ENCODE measurements at regions of chr16 and their contacts with region 1.

Region 1: GRCh38 chr16:68310761-68311511 is at the starts of genes PRMT7 and SLC7A6OS:
- DNase-seq: peak; percentile 88 to 94 (median 88)
- H3K4me3 ChIP-seq: peak within 1 kb of the TSS; percentile 88 to 97 (median 95)
- H3K4me3 Mint-ChIP-seq: peak within 1 kb of the TSS; percentile 92 to 95
- H3K27ac ChIP-seq: peak within 1 kb of the TSS; percentile 93 to 94
- H3K27ac Mint-ChIP-seq: peak within 1 kb of the TSS; percentile 91 to 96 (median 95)
- H3K4me1 ChIP-seq: peaks cover 23 to 26% of the 10 kb centered on the region in 2 donors
- H3K4me1 Mint-ChIP-seq: peaks cover 19% of the 10 kb centered on the region
- H3K27me3 ChIP-seq: no peaks in the 10 kb centered on the region
- H3K27me3 Mint-ChIP-seq: no peaks in the 10 kb centered on the region
- CTCF ChIP-seq: peak; percentile 19
- polyA plus RNA-seq, gene PRMT7: 15.0 to 41.1 (median 15.2) TPM
- polyA plus RNA-seq, gene SLC7A6OS: 9.3 to 10.5 (median 9.7) TPM

Region 2: GRCh38 chr16:68244903-68245853 is 65.8 kb before region 1 on chr16 and contains the start of gene PLA2G15:
- intact Hi-C with region 1: loop called (anchors 5 kb)
- DNase-seq: peak; percentile 79 to 92 (median 88)
- H3K4me3 ChIP-seq: peak within 1 kb of the TSS; percentile 69 to 89 (median 86)
- H3K4me3 Mint-ChIP-seq: peak within 1 kb of the TSS; percentile 97 to 98
- H3K27ac ChIP-seq: peak within 1 kb of the TSS; percentile 61 to 86
- H3K27ac Mint-ChIP-seq: peak within 1 kb of the TSS; percentile 60 to 92 (median 86)
- H3K4me1 ChIP-seq: peaks cover 39 to 47% of the 10 kb centered on the region in 2 donors
- H3K4me1 Mint-ChIP-seq: peaks cover 49% of the 10 kb centered on the region
- H3K27me3 ChIP-seq: no peaks in the 10 kb centered on the region
- H3K27me3 Mint-ChIP-seq: peaks cover 0 to 5% (median 0%) of the 10 kb centered on the region in 3 donors
- CTCF ChIP-seq: no peak
- polyA plus RNA-seq, gene PLA2G15: 27.8 to 34.8 (median 29.5) TPM

Region 3: DNA sequence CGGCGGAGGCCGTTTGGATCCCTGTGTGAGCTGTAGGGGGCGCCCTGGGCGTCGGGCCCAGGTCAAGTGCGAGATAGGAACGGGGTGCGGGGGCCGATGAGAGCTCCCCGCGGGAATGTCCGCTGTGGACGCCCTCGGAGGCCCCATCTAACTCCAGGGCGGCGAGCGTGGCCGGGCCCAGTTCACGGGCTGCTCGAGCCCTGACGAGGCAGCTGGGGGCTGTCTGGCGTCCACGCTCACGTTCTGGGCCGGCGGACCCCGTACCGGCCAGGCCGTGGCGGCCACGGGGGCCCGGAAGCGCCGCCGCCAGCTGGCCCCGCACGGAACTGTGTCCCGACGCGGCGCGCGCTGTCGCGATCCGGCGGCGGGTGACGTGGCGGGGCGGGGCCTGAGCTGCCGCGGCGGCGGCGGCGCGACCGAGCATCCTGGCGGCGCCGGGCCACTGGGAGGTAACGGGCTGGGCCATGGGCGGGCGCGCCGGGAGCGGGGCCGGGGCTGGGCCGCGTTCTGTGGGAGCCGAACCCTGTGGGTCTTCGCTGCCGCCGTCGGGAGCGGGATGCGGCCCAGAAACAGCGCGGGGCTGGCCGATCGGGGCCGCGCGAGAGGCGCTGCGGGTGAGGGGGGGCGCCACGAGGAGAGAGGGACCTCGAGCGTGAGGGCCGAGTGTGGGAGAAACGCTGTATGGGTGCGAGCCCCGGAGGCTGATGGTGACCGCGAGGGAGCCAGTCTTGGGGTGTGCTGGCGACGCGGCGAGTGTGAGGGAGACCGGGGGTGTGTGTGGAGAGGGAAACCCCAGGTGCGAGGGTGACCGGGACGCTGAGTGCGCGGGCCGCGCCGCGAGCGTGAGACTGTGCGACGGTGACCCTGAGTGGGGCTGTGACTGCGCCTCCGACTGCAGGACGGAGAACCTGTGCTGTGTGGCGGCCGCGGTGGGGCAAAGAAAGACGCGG is 46.5 kb before region 1 on chr16 and contains the start of gene SLC7A6:
- intact Hi-C with region 1: loop called (anchors 5 kb)
- DNase-seq: peak; percentile 64 to 75 (median 75)
- H3K4me3 ChIP-seq: peak within 1 kb of the TSS; percentile 73 to 83 (median 79)
- H3K4me3 Mint-ChIP-seq: peak within 1 kb of the TSS; percentile 97 to 99
- H3K27ac ChIP-seq: peak within 1 kb of the TSS; percentile 82 to 89
- H3K27ac Mint-ChIP-seq: peak within 1 kb of the TSS; percentile 88 to 96 (median 96)
- H3K4me1 ChIP-seq: peaks cover 24 to 28% of the 10 kb centered on the region in 2 donors
- H3K4me1 Mint-ChIP-seq: peaks cover 28% of the 10 kb centered on the region
- H3K27me3 ChIP-seq: no peaks in the 10 kb centered on the region
- H3K27me3 Mint-ChIP-seq: peaks cover 0 to 3% (median 0%) of the 10 kb centered on the region in 3 donors
- CTCF ChIP-seq: peak; percentile 85
- polyA plus RNA-seq, gene SLC7A6: 4.3 to 47.7 (median 5.5) TPM